Activated B cell treated with CpG ODN at 0.5 μM for 24 hours (primary cell): ENCODE measurements at regions of chr16 and their contacts with region 1.

Region 1: DNA sequence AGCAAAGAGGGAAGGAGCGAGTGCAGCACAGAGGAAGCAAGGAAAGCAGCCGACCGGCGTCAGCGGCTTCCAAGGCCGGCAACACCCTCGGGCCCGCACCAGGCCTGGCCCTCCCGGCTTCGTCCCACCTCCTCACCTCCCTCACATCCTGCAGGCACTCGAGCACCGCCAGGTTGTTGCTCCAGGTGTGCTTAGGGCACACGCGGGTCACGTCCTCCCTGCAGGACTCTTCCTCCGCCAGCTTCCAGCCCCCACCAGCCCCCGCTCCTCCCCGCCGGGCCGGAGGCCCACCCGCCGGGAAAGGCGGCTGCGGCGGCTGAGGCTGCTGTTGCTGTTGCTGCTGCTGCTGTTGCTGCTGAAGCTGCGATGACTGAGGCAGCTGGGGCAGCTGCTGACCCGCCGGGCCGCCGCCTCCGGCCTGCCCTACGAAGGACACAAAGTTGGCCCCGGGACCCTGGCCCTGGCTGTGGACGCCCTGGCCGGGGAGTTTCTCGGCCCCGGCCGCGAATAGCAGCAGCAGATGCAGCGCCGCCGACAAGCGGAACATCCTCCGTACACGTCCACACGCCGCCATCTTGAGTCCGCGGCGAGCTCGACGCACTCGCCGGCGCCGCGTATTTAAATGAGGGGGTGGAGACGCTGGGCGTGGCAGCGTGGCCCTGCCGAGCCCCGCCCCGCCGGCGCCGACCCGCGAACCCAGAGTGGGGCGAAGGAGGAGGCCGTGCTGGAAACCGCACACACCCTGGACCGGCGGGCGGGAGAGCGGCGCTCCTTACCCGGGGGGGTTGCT is at the start of gene GLG1:
- DNase-seq: peak; percentile 94
- ATAC-seq: peak; percentile 96
- H3K4me3 Mint-ChIP-seq: peak within 1 kb of the TSS; percentile 94
- H3K27ac Mint-ChIP-seq: peak within 1 kb of the TSS; percentile 91
- H3K4me1 Mint-ChIP-seq: peaks cover 45% of the 10 kb centered on the region
- H3K27me3 Mint-ChIP-seq: no peaks in the 10 kb centered on the region
- CTCF ChIP-seq: no peak
- total RNA-seq, gene GLG1: 72.7 and 81.4 TPM in 2 replicates

Region 2: GRCh38 chr16:74015953-74016352 is 590.8 kb before region 1 on chr16:
- CTCF ChIA-PET with region 1: no interaction called
- POLR2A ChIA-PET with region 1: no interaction called
- intact Hi-C with region 1: no loop called
- DNase-seq: no peak
- ATAC-seq: no peak
- H3K4me3 Mint-ChIP-seq: no peak overlapping the region
- H3K27ac Mint-ChIP-seq: no peak overlapping the region
- H3K4me1 Mint-ChIP-seq: no peaks in the 10 kb centered on the region
- H3K27me3 Mint-ChIP-seq: peaks cover under 1% of the 10 kb centered on the region
- CTCF ChIP-seq: no peak

Region 3: GRCh38 chr16:74492976-74493375 is 113.7 kb before region 1 on chr16:
- CTCF ChIA-PET with region 1: no interaction called
- POLR2A ChIA-PET with region 1: no interaction called
- intact Hi-C with region 1: loop called (anchors 10 kb)
- DNase-seq: no peak
- ATAC-seq: no peak
- H3K4me3 Mint-ChIP-seq: no peak overlapping the region
- H3K27ac Mint-ChIP-seq: no peak overlapping the region
- H3K4me1 Mint-ChIP-seq: no peaks in the 10 kb centered on the region
- H3K27me3 Mint-ChIP-seq: no peaks in the 10 kb centered on the region
- CTCF ChIP-seq: no peak

Region 4: DNA sequence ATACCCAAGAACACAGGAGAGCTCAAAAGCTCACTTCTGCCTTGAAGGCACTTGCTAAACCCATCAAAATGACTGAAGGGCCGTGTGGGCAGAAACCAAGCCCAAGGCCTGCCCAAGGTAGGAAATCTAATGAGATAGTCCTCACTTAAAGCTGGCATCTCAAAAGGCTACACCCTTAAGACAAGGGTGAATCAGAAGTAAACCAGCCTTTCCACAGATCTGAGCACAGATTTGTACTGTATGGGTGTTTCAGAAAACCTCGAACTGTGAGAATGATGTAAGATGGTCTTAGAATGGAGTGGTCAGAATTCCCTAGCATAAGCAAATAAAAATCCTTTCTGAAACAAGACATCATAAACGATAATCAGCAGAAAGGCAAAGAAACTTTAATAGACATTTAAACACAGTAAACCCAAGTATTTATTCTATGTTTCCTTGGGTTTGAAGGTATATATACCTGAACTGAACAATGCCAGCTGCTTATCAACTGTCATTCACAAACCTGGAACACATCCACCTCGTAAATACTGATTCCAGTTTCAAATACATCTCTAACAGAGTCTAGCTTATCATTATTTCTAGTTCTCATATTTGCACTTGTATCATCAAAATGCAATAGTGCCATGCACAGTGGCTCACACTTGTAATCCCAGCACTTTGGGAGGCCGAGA is 37.6 kb before region 1 on chr16:
- CTCF ChIA-PET with region 1: no interaction called
- POLR2A ChIA-PET with region 1: no interaction called
- intact Hi-C with region 1: no loop called
- DNase-seq: no peak
- ATAC-seq: no peak
- H3K4me3 Mint-ChIP-seq: no peak overlapping the region
- H3K27ac Mint-ChIP-seq: no peak overlapping the region
- H3K4me1 Mint-ChIP-seq: peaks cover 58% of the 10 kb centered on the region
- H3K27me3 Mint-ChIP-seq: no peaks in the 10 kb centered on the region
- CTCF ChIP-seq: no peak

Region 5: GRCh38 chr16:74591876-74592614 is 14.7 kb before region 1 on chr16:
- CTCF ChIA-PET with region 1: interaction called, 3 read pairs
- POLR2A ChIA-PET with region 1: interaction called, 8 read pairs
- intact Hi-C with region 1: loop called (anchors 1 kb)
- DNase-seq: no peak
- ATAC-seq: no peak
- H3K4me3 Mint-ChIP-seq: no peak overlapping the region
- H3K27ac Mint-ChIP-seq: peak overlapping the region; percentile 18
- H3K4me1 Mint-ChIP-seq: peaks cover 51% of the 10 kb centered on the region
- H3K27me3 Mint-ChIP-seq: no peaks in the 10 kb centered on the region
- CTCF ChIP-seq: no peak

Region 6: GRCh38 chr16:74666425-74667254 is 59.9 kb after region 1 on chr16 and contains the start of gene RFWD3:
- CTCF ChIA-PET with region 1: no interaction called
- POLR2A ChIA-PET with region 1: interaction called, 25 read pairs
- intact Hi-C with region 1: loop called (anchors 1 kb)
- DNase-seq: peak; percentile 78
- ATAC-seq: peak; percentile 99
- H3K4me3 Mint-ChIP-seq: peak within 1 kb of the TSS; percentile 94
- H3K27ac Mint-ChIP-seq: peak within 1 kb of the TSS; percentile 90
- H3K4me1 Mint-ChIP-seq: peaks cover 38% of the 10 kb centered on the region
- H3K27me3 Mint-ChIP-seq: no peaks in the 10 kb centered on the region
- CTCF ChIP-seq: no peak
- total RNA-seq, gene RFWD3: 57.9 and 63.2 TPM in 2 replicates

Region 7: GRCh38 chr16:74984535-74985296 is 378.0 kb after region 1 on chr16 and contains the start of gene WDR59:
- CTCF ChIA-PET with region 1: no interaction called
- POLR2A ChIA-PET with region 1: no interaction called
- intact Hi-C with region 1: loop called (anchors 10 kb)
- DNase-seq: peak; percentile 90
- ATAC-seq: peak; percentile 99
- H3K4me3 Mint-ChIP-seq: peak within 1 kb of the TSS; percentile 96
- H3K27ac Mint-ChIP-seq: peak within 1 kb of the TSS; percentile 88
- H3K4me1 Mint-ChIP-seq: peaks cover 20% of the 10 kb centered on the region
- H3K27me3 Mint-ChIP-seq: no peaks in the 10 kb centered on the region
- CTCF ChIP-seq: no peak
- total RNA-seq, gene WDR59: 80.8 and 93.3 TPM in 2 replicates